AG04449 (cell line): ENCODE measurements at regions of chr13 and their contacts with region 1.

Region 1: GRCh38 chr13:27826379-27827353 is 34.4 kb downstream of the GSX1 start:
- DNase-seq: peak; percentile 10
- H3K4me3 ChIP-seq: peak overlapping the region; percentile 49
- CTCF ChIP-seq: peak; percentile 95

Region 2: GRCh38 chr13:26985285-26985878 is 841.3 kb before region 1 on chr13:
- CTCF ChIA-PET with region 1: interaction called, 18 read pairs
- POLR2A ChIA-PET with region 1: no interaction called
- DNase-seq: peak; percentile 29
- H3K4me3 ChIP-seq: no peak overlapping the region
- CTCF ChIP-seq: peak; percentile 66

Region 3: GRCh38 chr13:27401210-27401609 is 425.5 kb before region 1 on chr13:
- CTCF ChIA-PET with region 1: interaction called, 55 read pairs
- POLR2A ChIA-PET with region 1: no interaction called
- DNase-seq: no peak
- H3K4me3 ChIP-seq: no peak overlapping the region
- CTCF ChIP-seq: no peak

Region 4: GRCh38 chr13:27523346-27524073 is 303.2 kb before region 1 on chr13:
- CTCF ChIA-PET with region 1: interaction called, 335 read pairs
- POLR2A ChIA-PET with region 1: no interaction called
- DNase-seq: no peak
- H3K4me3 ChIP-seq: no peak overlapping the region
- CTCF ChIP-seq: no peak

Region 5: DNA sequence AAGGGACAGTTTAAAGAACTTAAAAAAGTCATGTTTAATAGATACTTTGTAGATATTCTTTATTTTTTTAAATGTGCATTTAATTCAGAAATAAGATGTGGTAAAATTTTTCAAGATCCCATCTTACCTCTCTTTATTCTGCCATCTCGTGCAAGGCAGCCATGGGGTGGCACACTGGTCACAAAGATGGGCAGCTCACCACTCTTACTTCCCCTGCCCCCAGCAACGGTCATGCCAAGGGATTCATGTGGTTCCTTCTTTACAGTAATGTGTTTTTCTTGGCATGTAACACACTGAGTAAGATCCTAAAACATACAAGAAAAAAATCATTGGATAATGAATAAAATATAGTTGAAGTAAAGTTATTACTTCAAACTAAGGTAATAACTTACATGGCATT is 270.6 kb before region 1 on chr13:
- CTCF ChIA-PET with region 1: interaction called, 91 read pairs
- POLR2A ChIA-PET with region 1: no interaction called
- DNase-seq: peak; percentile 37
- H3K4me3 ChIP-seq: no peak overlapping the region
- CTCF ChIP-seq: peak; percentile 25

Region 6: GRCh38 chr13:27808851-27809550 is 17.7 kb before region 1 on chr13:
- CTCF ChIA-PET with region 1: interaction called, 21 read pairs
- POLR2A ChIA-PET with region 1: no interaction called
- DNase-seq: no peak
- H3K4me3 ChIP-seq: no peak overlapping the region
- CTCF ChIP-seq: no peak

Region 7: DNA sequence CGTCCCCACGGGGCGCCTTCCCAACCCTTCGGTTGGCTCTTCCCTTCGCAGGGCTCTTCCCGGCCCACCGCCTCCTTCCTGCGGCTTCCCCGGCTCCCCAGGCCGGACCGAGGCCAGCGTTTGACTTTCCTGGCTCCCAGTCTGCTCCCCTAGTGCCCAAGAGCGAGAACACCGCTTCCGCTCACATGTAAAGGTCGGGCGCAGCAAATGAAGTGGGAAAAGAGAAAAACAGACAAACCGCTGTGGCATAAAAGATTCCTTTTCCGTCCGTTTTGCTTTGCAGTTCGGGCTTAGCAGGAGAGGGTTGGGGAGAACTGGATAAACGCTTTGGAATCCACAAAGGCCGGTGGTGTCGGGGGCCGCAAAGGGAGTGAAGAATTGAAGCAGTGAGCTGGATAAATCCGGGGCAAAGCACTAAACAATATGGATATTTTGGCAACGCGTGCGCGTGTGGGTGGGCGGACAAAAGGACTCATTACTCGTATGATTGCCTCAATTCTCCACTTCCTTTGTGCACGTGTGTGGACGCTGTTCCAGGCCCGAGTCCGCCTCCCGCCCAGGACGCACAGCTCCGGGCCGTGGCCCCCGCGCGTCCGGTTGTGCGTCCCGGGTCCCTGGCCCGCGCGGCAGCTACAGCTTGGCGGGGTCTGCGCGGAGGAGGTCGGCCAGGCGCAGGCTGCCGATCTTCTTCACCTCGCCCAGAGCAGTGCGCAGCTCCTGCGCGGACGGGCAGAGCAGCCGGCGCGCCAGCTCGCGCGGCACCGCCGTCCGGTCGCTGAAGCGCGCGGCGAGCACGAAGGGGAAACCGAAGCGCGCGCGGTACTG is 151.0 kb after region 1 on chr13:
- CTCF ChIA-PET with region 1: interaction called, 321 read pairs
- POLR2A ChIA-PET with region 1: no interaction called
- DNase-seq: no peak
- H3K4me3 ChIP-seq: no peak overlapping the region
- CTCF ChIP-seq: no peak